ENCODE measurements at regions of chr20 and their contacts with region 1.

Region 1: DNA sequence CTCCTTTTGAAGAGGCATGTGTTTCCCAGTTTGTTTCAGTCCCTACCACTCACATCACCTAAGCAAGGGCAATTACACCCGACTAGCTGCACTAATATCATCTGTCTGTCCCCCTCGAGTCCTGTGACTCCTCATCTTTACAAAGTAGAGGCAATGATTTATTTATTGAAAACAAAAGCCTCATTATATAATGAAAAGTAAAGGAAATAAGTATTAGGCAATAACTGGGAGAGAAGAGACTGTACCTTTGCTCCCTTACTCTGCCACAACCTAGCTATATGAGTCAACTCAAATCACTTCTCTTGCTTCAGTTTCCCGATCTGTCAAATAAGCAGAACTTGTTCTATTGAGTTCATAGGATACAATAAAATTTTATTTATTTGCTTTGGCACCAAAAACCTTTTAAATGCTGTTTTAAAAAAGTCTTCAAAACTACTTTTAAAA is 38.9 kb downstream of the CSNK2A1 start:
- H3K4me3 ChIP-seq: no peak overlapping the region
- H3K27ac ChIP-seq: no peak overlapping the region
- H3K4me1 ChIP-seq: 0 out of 2 replicates have a peak, but pooled peaks cover 2% of the 10 kb centered on the region
- CTCF ChIP-seq: no peak

Region 2: DNA sequence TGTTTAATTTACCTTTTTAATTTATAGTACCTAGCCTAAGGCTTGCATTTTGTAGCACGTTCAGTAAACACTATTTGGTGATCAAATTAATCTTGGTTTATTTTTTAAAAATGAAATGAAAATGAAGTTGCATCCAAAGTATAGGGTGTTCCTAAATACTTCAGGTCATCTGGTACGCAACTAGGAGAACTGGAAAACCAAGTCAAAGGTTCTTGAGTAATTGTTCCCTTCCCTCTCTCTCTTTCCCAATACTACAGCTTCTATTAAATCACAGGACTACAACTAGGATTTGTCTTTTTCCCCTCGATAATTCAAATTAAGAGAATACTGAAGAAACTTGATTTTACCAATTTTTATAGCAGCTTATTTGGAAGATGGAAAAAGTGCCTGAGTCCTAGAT is 11.0 kb after region 1 on chr20:
- CTCF ChIA-PET with region 1: interaction called, 10 read pairs
- POLR2A ChIA-PET with region 1: no interaction called
- H3K4me3 ChIP-seq: no peak overlapping the region
- H3K27ac ChIP-seq: no peak overlapping the region
- H3K4me1 ChIP-seq: peaks cover 12% of the 10 kb centered on the region; the same call in 1 of the 2 replicates
- CTCF ChIP-seq: no peak

Measured in HEK293 (cell line).